BJ (cell line): ENCODE measurements at regions of chr14 and their contacts with region 1.

Region 1: GRCh38 chr14:22955702-22956569 is 954 bp downstream of the HAUS4 start:
- DNase-seq: no peak
- H3K4me3 ChIP-seq: peak overlapping the region; percentile 53
- H3K27me3 ChIP-seq: no peaks in the 10 kb centered on the region; the same call in 1 of the 2 replicates
- CTCF ChIP-seq: no peak

Region 2: DNA sequence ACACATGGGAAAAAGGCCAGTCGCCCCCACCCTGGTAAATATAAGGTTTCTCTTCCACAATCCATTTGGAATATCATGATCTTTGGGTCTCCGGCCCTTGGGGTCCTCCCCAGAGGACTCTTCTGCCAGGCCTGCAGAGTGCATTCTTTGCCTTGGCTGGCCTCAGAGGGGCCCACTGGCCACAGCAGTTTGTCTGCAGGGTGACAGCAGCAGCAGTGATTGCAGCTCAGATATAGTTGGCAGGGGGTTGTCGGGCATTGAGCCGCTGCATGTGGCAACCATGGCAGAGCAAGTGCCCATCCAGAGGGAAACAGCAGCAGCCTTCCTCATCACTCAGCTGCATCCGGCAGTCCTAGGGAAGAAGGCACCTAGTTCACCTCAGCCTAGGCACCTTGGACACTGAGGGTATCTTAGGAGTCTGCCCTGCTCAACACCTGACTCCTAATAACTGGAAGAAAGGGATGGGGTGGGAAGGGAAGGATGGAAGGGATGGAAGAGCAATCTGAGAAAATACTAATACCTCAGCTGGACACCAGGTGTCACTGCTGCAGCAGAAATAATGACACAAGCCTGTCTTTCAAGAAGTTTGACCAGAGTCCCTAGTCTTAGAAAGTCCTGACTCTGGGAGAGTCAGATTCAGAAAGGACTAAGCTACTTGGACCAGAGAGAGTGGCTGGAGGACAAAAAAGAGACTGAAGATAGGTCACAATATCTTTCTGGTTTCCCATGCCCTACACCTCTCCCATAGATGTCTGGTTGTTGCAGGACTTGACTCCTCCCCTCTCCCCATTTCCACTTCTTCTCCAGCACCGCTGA is 17.5 kb after region 1 on chr14:
- CTCF ChIA-PET with region 1: interaction called, 19 read pairs
- POLR2A ChIA-PET with region 1: interaction called, 3 read pairs
- DNase-seq: no peak
- H3K4me3 ChIP-seq: no peak overlapping the region
- H3K27me3 ChIP-seq: no peaks in the 10 kb centered on the region
- CTCF ChIP-seq: peak; percentile 65

Region 3: DNA sequence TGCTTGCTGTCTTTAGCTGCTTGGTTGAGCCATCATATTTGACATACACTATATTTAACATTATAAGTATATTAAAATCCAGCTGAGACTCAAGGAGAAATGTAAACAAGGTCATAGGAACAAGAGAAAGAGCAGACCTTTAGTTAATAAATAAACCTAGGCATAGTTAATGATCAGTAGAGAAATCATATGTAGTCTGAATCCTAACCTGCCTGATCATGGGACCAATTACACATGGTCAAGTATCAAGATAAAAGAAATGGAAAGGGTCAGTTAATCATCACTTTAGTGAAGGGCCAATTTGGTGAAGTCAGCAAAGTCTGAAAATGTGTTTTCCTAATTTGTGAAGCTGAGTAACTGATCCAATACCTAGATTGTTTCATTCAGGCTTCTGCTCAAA is 289.3 kb after region 1 on chr14:
- CTCF ChIA-PET with region 1: no interaction called
- POLR2A ChIA-PET with region 1: no interaction called
- DNase-seq: no peak
- H3K4me3 ChIP-seq: no peak overlapping the region
- H3K27me3 ChIP-seq: no peaks in the 10 kb centered on the region; the same call in 1 of the 2 replicates
- CTCF ChIP-seq: no peak